SK-N-SH (cell line): ENCODE measurements at regions of chr14 and their contacts with region 1.

Region 1: GRCh38 chr14:75560962-75561432 is 17.4 kb upstream of the FLVCR2 start:
- DNase-seq: peak; percentile 86
- H3K4me3 ChIP-seq: no peak overlapping the region; a peak in 1 of 4 replicates
- H3K27ac ChIP-seq: no peak overlapping the region
- H3K4me1 ChIP-seq: peaks cover 0 to 8% of the 10 kb centered on the region in 2 experiments; a peak in 1 of 4 replicates
- H3K27me3 ChIP-seq: peaks cover 12% of the 10 kb centered on the region; the same call in 1 of the 2 replicates
- CTCF ChIP-seq: peak; percentile 85
- EP300 ChIP-seq: no peak
- RAD21 ChIP-seq: peak; percentile 85

Region 2: DNA sequence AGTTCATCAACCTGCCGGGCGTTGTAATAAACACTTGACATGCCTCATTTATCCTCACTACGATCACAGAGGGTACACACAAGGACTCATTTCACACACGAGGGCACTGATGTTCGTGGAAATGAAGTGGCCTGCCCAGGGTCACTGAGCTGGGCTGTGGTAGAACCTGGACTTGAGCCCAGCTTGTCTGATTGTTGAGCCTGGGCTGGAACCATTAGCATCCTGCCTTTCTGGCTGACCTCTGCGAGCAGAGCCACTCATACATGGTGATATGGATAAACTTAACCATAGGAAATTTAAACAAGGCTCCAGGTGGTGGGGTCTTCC is 149.8 kb before region 1 on chr14:
- CTCF ChIA-PET with region 1: no interaction called
- POLR2A ChIA-PET with region 1: no interaction called
- DNase-seq: no peak
- H3K4me3 ChIP-seq: no peak overlapping the region
- H3K27ac ChIP-seq: no peak overlapping the region
- H3K4me1 ChIP-seq: peaks cover 0 to 2% of the 10 kb centered on the region in 2 experiments; a peak in 1 of 4 replicates
- H3K27me3 ChIP-seq: peaks cover 9% of the 10 kb centered on the region; the same call in 1 of the 2 replicates
- CTCF ChIP-seq: no peak
- EP300 ChIP-seq: no peak
- RAD21 ChIP-seq: no peak

Region 3: GRCh38 chr14:75427482-75428229 is 133.3 kb before region 1 on chr14 and contains the start of gene JDP2:
- CTCF ChIA-PET with region 1: interaction called, 11 read pairs
- POLR2A ChIA-PET with region 1: no interaction called
- DNase-seq: peak; percentile 93
- H3K4me3 ChIP-seq: peak within 1 kb of the TSS; percentile 68 to 80
- H3K27ac ChIP-seq: peak within 1 kb of the TSS; percentile 34 to 69; a peak in 2 of 4 replicates
- H3K4me1 ChIP-seq: peaks cover 7 to 37% of the 10 kb centered on the region in 2 experiments; a peak in 2 of 4 replicates
- H3K27me3 ChIP-seq: no peaks in the 10 kb centered on the region
- CTCF ChIP-seq: no peak
- EP300 ChIP-seq: no peak
- RAD21 ChIP-seq: no peak
- polyA plus RNA-seq, gene JDP2: 21.1 and 22.3 TPM in 2 replicates

Region 4: GRCh38 chr14:75487155-75487671 is 73.8 kb before region 1 on chr14:
- CTCF ChIA-PET with region 1: interaction called, 24 read pairs
- POLR2A ChIA-PET with region 1: no interaction called
- DNase-seq: no peak
- H3K4me3 ChIP-seq: no peak overlapping the region
- H3K27ac ChIP-seq: no peak overlapping the region
- H3K4me1 ChIP-seq: no peaks in the 10 kb centered on the region
- H3K27me3 ChIP-seq: no peaks in the 10 kb centered on the region
- CTCF ChIP-seq: no peak
- EP300 ChIP-seq: no peak
- RAD21 ChIP-seq: no peak

Region 5: DNA sequence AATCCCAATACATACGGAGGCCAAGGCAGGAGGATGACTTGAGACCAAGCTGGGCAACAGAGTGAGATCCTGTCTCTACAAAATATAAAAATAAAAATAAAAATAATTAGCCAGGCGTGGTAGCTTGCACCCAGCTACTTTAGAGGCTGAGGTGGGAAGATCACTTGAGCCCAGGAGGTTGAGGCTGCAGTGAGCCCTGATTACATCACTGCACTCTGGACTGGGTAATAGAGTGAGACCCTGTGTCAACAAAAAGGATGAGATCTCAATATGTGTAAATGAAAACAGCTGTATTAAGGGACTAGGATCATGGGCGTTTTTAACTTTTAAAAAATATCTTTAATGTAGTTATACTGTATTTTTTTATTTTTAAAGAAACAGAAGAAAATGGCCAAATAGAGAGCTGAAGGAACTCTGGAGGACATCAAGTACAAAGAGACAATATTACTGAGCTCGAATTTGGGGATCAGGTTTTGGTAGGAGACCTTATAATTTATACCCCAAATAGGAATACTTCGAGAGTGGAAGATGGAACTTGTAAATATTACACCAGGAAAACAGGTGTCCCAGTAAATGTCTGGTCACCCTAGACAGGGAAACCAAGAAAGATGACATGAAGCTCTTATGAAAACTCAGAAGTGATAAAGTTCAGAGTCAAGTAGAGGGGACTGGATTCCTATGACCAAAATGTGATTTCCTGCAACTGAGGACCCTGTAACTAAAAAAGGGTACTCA is 25.7 kb before region 1 on chr14:
- CTCF ChIA-PET with region 1: interaction called, 12 read pairs
- POLR2A ChIA-PET with region 1: no interaction called
- DNase-seq: no peak
- H3K4me3 ChIP-seq: no peak overlapping the region
- H3K27ac ChIP-seq: peak overlapping the region in 1 of 2 experiments; percentile 16; a peak in 1 of 4 replicates
- H3K4me1 ChIP-seq: peaks cover 0 to 9% of the 10 kb centered on the region in 2 experiments; a peak in 1 of 4 replicates
- H3K27me3 ChIP-seq: no peaks in the 10 kb centered on the region
- CTCF ChIP-seq: no peak
- EP300 ChIP-seq: no peak
- RAD21 ChIP-seq: no peak

Region 6: GRCh38 chr14:75549169-75549568 is 11.8 kb before region 1 on chr14:
- CTCF ChIA-PET with region 1: interaction called, 31 read pairs
- POLR2A ChIA-PET with region 1: no interaction called
- DNase-seq: no peak
- H3K4me3 ChIP-seq: no peak overlapping the region
- H3K27ac ChIP-seq: no peak overlapping the region
- H3K4me1 ChIP-seq: peaks cover 0 to 2% of the 10 kb centered on the region in 2 experiments; a peak in 2 of 4 replicates
- H3K27me3 ChIP-seq: no peaks in the 10 kb centered on the region; the same call in 1 of the 2 replicates
- CTCF ChIP-seq: no peak
- EP300 ChIP-seq: no peak
- RAD21 ChIP-seq: no peak

Region 7: DNA sequence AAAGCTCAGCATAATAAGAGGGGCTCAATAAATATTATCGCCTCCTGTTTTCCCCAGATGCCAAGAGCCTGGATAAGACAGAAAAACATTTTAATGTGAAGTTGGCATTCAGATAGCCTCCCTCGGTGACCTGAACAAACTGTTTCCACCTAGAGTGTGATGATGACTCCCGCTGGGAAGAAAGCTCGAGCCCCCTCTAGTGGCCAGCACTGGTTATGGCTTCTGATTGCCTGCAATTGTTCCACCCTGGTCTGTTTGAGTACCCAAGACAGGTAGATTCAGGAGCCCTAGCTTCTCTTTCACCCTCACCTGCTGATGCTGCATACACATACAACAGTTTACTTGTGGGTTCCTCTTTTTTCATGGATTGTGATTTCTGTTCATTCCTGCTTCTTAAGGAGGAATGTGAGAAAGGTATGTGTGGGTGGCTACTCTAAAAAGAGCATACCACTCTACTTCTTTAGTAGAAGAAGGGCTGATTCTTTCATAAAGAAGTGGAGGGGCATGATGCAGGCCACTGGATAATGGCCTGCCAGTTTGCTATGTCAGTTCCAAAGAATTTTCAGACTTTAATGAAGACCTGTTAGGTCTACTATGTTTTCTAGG is 93.2 kb after region 1 on chr14:
- CTCF ChIA-PET with region 1: interaction called, 58 read pairs
- POLR2A ChIA-PET with region 1: no interaction called
- DNase-seq: peak; percentile 77
- H3K4me3 ChIP-seq: no peak overlapping the region; a peak in 1 of 4 replicates
- H3K27ac ChIP-seq: no peak overlapping the region
- H3K4me1 ChIP-seq: no peaks in the 10 kb centered on the region; a peak in 1 of 4 replicates
- H3K27me3 ChIP-seq: no peaks in the 10 kb centered on the region
- CTCF ChIP-seq: peak; percentile 96
- EP300 ChIP-seq: no peak
- RAD21 ChIP-seq: peak; percentile 91